ENCODE measurements at regions of chrX and their contacts with region 1.

Region 1: DNA sequence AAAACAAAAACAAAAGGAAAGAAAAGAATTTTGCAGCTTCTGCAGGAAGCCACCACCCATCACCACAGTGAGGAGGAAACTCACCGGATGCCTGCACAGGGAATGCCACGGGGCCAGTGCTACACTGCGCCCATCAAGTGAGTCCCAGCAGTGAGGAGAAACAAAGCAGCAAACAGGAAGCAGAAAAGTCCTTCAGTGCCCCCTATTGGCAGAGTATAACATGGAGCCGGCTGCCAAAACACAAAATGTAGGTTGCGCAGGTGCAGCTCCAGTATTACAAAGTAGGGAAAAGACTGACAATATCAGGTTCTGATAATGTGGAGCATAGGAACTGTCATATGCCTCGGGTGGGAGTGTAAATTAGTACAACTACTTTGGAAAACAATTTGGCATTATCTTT is 23.3 kb upstream of the SCML2 start:
- DNase-seq: no peak
- H3K4me3 ChIP-seq: no peak overlapping the region
- CTCF ChIP-seq: peak; percentile 50

Region 2: DNA sequence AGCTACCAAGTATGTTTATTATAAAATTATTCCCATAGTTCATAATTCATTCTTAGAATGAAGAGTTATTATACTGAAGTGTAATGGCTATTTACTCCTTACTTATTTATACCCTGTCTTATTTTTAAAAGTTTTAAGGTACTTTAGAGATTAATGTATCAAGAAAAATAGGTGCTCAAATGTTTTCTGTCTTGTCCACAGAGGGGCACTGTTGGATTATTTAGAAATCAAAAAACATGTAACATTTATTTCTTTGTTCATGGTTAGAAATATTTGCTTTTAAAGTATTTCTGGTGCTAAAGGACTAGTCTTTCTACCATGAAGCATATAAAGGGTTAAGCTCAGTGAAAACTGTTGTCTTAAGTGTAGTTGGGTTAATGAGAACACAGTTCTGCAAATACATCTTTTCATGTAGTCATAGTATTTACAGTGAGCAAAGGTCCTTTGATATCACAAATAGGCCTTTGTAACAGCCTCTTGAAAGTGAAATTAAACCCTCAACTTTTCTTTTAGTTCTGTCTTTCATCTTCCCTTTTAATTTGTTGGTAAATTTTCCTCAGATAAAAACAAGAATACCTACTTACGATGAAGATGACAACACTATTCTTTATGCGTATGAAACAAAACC is 632.8 kb before region 1 on chrX:
- CTCF ChIA-PET with region 1: interaction called, 10 read pairs
- POLR2A ChIA-PET with region 1: no interaction called
- DNase-seq: no peak
- H3K4me3 ChIP-seq: no peak overlapping the region
- CTCF ChIP-seq: no peak

Measured in AG04449 (cell line).